ENCODE measurements at regions of chr3 and their contacts with region 1.

Region 1: DNA sequence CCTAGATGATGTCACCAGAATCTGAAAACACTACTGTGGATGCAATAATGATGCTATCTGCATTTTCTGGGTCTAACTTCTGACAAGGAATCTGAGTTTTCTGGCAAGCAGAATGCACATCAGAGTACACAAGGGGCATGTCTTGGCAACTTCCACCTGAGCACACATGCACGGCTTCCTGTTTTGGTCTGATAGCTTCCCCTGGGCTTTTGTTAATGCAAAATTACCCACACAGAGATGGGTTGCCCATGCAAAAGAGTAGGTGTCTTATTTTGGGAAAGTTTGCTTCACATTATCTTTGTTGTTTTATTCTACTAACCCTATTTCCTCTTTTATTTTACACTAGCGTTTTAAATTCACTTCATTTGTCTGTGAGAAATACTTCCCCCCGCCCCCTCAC is 74.2 kb upstream of the SATB1 start:
- DNase-seq: peak in 7 of 9 donors; percentile 4 to 47 (median 30)
- ATAC-seq: peak; percentile 78
- H3K4me3 ChIP-seq: no peak overlapping the region
- H3K4me3 Mint-ChIP-seq: peak overlapping the region; percentile 18 to 74 (median 62)
- H3K27ac ChIP-seq: peak overlapping the region; percentile 6
- H3K27ac Mint-ChIP-seq: peak overlapping the region; percentile 14 to 90 (median 73)
- H3K4me1 ChIP-seq: peaks cover 7 to 30% of the 10 kb centered on the region in 2 donors
- H3K4me1 Mint-ChIP-seq: peaks cover 21 to 57% (median 49%) of the 10 kb centered on the region in 7 donors
- H3K27me3 ChIP-seq: no peaks in the 10 kb centered on the region
- H3K27me3 Mint-ChIP-seq: no peaks in the 10 kb centered on the region

Region 2: DNA sequence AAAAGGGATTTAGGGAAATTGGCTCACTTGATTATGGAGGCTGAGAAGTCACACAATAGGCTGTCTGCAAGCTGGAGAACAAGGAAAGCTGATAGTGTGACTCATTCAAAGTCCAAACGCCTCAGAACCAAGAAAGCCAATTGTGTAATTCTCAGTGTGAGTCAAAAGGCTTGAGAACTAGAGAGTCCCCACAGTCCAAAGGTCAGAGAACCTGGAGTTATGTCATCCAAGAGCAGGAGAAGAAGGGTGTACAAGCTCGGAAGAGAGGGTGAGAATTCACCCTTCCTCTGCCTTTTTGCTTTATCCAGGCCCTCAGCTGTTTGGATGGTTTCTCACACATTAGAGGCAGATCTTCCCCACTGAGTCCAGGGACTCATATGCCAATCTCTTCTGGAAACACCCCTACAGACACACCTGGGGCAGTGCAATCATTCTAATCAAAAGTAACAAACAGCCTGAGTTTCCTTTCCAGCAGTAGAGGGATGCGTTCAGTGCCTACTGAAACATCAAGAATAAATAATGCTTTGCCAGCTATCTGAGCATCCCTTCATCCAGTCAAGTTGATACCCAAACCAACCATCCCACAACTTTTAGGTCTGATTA is 345.6 kb before region 1 on chr3:
- CTCF ChIA-PET with region 1: no interaction called
- POLR2A ChIA-PET with region 1: no interaction called
- intact Hi-C with region 1: no loop called
- DNase-seq: no peak
- ATAC-seq: no peak
- H3K4me3 ChIP-seq: no peak overlapping the region
- H3K4me3 Mint-ChIP-seq: no peak overlapping the region
- H3K27ac ChIP-seq: no peak overlapping the region
- H3K27ac Mint-ChIP-seq: no peak overlapping the region
- H3K4me1 ChIP-seq: no peaks in the 10 kb centered on the region
- H3K4me1 Mint-ChIP-seq: peaks cover 0 to 3% (median 0%) of the 10 kb centered on the region in 7 donors
- H3K27me3 ChIP-seq: no peaks in the 10 kb centered on the region
- H3K27me3 Mint-ChIP-seq: peaks cover 0 to 9% (median 0%) of the 10 kb centered on the region in 5 donors

Region 3: DNA sequence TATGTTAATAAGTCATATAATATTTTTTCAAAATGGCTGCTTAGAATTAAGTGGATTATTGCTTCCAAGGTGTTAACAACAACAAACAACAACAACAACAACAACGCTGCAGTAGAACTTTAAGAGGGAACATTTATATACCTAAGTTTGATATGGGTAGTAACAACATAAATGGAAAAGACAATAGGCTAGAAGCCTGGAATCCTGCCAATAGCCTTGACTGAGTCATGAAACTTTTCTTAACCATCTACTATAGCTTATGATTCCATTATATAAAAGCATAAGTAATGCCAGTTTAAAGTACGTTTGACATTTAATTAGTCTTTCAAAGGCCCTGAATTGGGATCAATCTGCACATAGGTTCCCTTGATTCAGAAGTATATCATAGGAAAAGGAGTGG is 105.4 kb before region 1 on chr3:
- CTCF ChIA-PET with region 1: no interaction called
- POLR2A ChIA-PET with region 1: no interaction called
- intact Hi-C with region 1: no loop called
- DNase-seq: peak in 1 of 9 donors; percentile 29
- ATAC-seq: no peak
- H3K4me3 ChIP-seq: no peak overlapping the region
- H3K4me3 Mint-ChIP-seq: peak overlapping the region in 9 of 10 donors; percentile 55 to 71 (median 66)
- H3K27ac ChIP-seq: peak overlapping the region; percentile 8
- H3K27ac Mint-ChIP-seq: peak overlapping the region; percentile 77 to 95 (median 85)
- H3K4me1 ChIP-seq: peaks cover 0 to 67% of the 10 kb centered on the region in 2 donors
- H3K4me1 Mint-ChIP-seq: peaks cover 38 to 97% (median 92%) of the 10 kb centered on the region in 7 donors
- H3K27me3 ChIP-seq: no peaks in the 10 kb centered on the region
- H3K27me3 Mint-ChIP-seq: no peaks in the 10 kb centered on the region

Region 4: DNA sequence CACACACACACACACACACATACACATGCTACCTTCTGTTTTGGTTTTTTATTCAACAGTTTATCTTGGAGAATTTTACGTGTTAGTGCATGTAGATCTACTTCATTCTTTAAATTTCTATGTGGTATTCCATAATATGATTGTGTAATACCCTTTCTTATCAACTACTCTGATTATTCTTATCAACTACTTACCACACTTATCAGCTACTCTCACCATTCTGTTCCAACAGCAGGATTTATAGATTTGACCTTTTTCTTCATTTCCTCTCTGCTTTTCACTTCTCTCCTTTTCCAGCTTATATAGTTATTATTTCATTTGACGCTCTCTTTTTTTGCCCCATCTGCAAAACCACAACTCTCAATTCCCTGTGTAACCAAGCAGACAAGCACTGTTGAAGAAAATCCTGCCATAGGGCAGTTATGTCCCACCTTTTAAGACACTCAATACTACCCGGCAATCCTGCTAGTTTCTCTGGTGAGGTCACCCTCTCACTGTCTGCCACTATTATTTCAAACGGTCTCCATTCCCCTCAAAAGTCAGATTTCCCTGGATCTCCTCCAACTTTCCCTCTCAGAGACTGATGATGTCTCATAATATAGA is 17.3 kb before region 1 on chr3:
- CTCF ChIA-PET with region 1: no interaction called
- POLR2A ChIA-PET with region 1: interaction called, 3 read pairs
- intact Hi-C with region 1: loop called in 1 of 2 experiments (anchors 2 kb)
- DNase-seq: no peak
- ATAC-seq: no peak
- H3K4me3 ChIP-seq: no peak overlapping the region
- H3K4me3 Mint-ChIP-seq: peak overlapping the region in 1 of 10 donors; percentile 1
- H3K27ac ChIP-seq: no peak overlapping the region
- H3K27ac Mint-ChIP-seq: peak overlapping the region in 4 of 9 donors; percentile 0 to 27 (median 8)
- H3K4me1 ChIP-seq: peaks cover 0 to 3% of the 10 kb centered on the region in 2 donors
- H3K4me1 Mint-ChIP-seq: peaks cover 2 to 42% (median 29%) of the 10 kb centered on the region in 7 donors
- H3K27me3 ChIP-seq: no peaks in the 10 kb centered on the region
- H3K27me3 Mint-ChIP-seq: no peaks in the 10 kb centered on the region

Region 5: DNA sequence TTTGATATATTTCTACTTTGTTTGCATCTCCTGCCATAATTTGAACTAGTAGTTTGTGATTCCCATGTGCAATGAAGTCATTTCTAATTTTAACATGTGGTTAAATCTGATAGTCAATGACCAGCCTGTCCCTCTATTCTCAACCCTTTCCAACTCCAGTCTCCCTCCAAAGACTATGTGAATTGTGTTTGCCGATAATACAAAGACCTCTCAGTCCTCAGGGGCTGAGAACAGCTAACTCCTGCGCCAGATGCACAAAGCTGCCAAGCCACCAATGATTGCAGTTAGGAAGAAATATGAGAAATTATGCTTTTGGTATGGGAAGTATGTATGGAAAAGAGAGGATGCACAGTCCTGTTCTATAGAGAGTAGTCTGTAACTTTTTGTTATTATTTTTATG is 703.0 kb after region 1 on chr3:
- CTCF ChIA-PET with region 1: no interaction called
- POLR2A ChIA-PET with region 1: no interaction called
- intact Hi-C with region 1: no loop called
- DNase-seq: no peak
- ATAC-seq: no peak
- H3K4me3 ChIP-seq: no peak overlapping the region
- H3K4me3 Mint-ChIP-seq: no peak overlapping the region
- H3K27ac ChIP-seq: no peak overlapping the region
- H3K27ac Mint-ChIP-seq: no peak overlapping the region
- H3K4me1 ChIP-seq: no peaks in the 10 kb centered on the region
- H3K4me1 Mint-ChIP-seq: no peaks in the 10 kb centered on the region
- H3K27me3 ChIP-seq: no peaks in the 10 kb centered on the region
- H3K27me3 Mint-ChIP-seq: peaks cover 3 to 13% (median 9%) of the 10 kb centered on the region in 5 donors